Cardiac septum (tissue), 1 donor: ENCODE measurements at regions of chr1 and their contacts with region 1.

Region 1: DNA sequence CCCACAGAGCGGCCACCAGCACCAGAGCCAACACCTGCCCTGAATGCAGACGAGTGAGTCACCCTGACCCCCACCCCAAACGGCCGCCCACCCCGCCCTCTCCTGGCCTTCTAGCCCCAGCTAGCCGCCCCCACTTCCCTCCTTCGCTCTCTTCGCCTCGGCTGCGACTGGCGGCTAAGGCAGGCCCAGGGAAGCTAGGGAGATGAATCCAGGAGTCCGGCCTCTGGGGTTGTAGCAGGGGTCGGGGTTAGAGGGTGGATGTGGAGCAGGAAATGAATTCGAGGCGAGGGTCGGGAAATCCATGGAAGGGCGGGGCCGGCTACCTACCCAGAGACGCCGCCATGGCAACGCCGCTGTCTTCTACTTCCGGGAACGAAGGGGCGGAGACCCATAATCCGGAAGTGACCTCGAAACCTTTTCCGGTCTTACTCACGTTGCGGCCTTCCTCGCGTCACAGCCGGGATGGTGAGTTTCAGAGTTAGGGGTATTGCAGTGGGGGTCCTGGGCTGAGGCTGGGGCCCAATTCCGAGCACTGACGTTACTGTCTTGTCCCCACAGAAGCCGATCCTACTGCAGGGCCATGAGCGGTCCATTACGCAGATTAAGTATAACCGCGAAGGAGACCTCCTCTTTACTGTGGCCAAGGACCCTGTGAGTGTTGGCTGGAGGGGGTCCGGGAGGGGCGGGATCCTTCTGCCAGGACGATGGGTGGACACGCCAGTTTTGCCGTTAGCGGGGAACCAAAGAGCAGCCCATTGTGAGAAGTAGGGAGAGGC is at the starts of genes EIF3I and TMEM234:
- DNase-seq: peak; percentile 97
- total RNA-seq, gene EIF3I: 91.5 TPM
- total RNA-seq, gene TMEM234: 12.3 TPM

Region 2: GRCh38 chr1:32240140-32240951 is 18.2 kb after region 1 on chr1:
- intact Hi-C with region 1: loop called (anchors 2 kb)
- DNase-seq: peak; percentile 84

Region 3: DNA sequence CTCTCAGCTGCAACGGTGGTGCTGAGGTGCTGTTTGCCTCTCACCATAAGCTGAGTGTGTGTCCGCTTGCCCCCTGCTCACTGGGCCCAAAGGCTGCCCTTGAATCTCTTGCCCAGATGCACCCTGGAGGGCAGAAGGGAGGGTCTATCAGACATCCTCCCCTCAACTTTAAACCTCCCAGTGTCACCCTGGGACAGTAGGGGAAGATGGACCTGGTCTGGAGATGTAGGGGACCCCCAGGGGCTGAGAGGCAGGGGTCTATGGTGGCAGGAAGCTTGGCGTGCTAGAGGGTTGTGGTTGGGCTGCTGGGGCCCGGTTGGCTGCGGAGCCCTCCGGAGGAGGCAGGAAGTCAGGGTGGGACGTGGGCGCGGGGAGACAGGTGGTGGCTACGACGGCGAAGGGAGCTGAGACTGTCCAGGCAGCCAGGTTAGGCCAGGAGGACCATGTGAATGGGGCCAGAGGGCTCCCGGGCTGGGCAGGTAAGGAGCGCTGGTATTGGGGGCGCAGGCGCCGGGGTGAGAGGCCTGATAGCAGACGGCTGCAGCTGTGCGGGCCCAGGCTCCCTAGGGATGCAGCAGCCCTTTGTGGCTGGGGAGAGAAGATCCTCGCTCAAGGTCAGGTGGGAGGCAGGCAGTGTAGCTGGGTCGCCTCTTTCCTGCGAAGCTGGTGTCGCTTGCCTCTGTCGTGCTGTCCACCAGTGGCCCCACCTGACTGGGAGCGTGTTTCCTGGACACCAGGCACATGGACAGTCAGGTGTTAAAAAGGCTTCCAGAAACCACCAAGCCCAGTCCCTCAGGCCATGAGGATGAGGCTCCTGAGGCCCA is 28.9 kb after region 1 on chr1 and contains the start of gene LCK:
- intact Hi-C with region 1: no loop called
- DNase-seq: no peak
- total RNA-seq, gene LCK: 0.54 TPM

Region 4: GRCh38 chr1:32394141-32394889 is 172.1 kb after region 1 on chr1 and contains the start of gene BSDC1:
- intact Hi-C with region 1: loop called (anchors 5 kb)
- DNase-seq: peak; percentile 99
- total RNA-seq, gene BSDC1: 41.3 TPM